ENCODE measurements at regions of chr12 and their contacts with region 1.

Region 1: GRCh38 chr12:74415633-74416032 is 122.0 kb upstream of the ATXN7L3B start:
- DNase-seq: peak; percentile 19
- H3K4me3 ChIP-seq: no peak overlapping the region
- H3K27ac ChIP-seq: no peak overlapping the region
- H3K4me1 ChIP-seq: no peaks in the 10 kb centered on the region
- H3K27me3 ChIP-seq: no peaks in the 10 kb centered on the region
- CTCF ChIP-seq: peak in 1 of 2 donors; percentile 29
- POLR2A ChIP-seq: no peak

Region 2: GRCh38 chr12:73421832-73422231 is 993.8 kb before region 1 on chr12:
- CTCF ChIA-PET with region 1: no interaction called
- POLR2A ChIA-PET with region 1: no interaction called
- dilution Hi-C with region 1: no loop called
- intact Hi-C with region 1: no loop called
- DNase-seq: no peak
- H3K4me3 ChIP-seq: no peak overlapping the region
- H3K27ac ChIP-seq: no peak overlapping the region
- H3K4me1 ChIP-seq: no peaks in the 10 kb centered on the region
- H3K27me3 ChIP-seq: no peaks in the 10 kb centered on the region
- CTCF ChIP-seq: no peak
- POLR2A ChIP-seq: no peak

Region 3: GRCh38 chr12:74021937-74022336 is 393.7 kb before region 1 on chr12:
- CTCF ChIA-PET with region 1: interaction called, 15 read pairs
- POLR2A ChIA-PET with region 1: no interaction called
- dilution Hi-C with region 1: no loop called
- intact Hi-C with region 1: loop called (anchors 2 kb)
- DNase-seq: peak; percentile 33
- H3K4me3 ChIP-seq: no peak overlapping the region
- H3K27ac ChIP-seq: no peak overlapping the region
- H3K4me1 ChIP-seq: no peaks in the 10 kb centered on the region
- H3K27me3 ChIP-seq: no peaks in the 10 kb centered on the region
- CTCF ChIP-seq: peak; percentile 42 to 57
- POLR2A ChIP-seq: no peak

Region 4: DNA sequence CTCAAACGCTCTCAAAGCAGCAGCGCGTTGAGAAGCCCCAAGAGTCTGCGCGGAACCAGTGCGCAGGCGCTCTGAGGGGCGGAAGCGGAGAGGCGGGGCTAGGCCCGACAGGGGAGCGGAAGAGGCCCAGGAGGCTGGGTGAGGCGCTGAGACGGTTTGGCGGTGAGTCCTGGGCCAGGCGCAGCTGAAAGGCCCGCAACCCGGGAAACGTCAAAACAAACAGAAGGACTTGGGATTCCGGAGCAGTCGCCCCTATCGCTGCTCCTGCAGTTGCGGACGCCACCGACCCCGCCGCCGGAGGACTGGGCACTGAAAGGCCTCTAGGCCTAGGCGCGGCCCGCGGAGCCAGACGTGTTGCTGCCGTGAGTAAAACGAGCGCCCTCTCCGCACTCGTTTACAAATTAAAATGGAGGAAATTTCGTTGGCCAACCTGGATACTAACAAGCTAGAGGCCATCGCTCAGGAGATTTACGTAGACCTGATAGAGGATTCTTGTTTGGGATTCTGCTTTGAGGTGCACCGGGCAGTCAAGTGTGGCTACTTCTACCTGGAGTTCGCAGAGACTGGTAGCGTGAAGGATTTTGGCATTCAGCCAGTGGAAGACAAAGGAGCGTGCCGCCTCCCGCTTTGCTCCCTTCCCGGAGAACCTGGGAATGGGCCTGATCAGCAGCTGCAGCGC is 122.2 kb after region 1 on chr12 and contains the start of gene ATXN7L3B:
- CTCF ChIA-PET with region 1: no interaction called
- POLR2A ChIA-PET with region 1: no interaction called
- dilution Hi-C with region 1: no loop called
- intact Hi-C with region 1: loop called (anchors 5 kb)
- DNase-seq: peak; percentile 96
- H3K4me3 ChIP-seq: peak within 1 kb of the TSS; percentile 63 to 96 (median 74)
- H3K27ac ChIP-seq: peak within 1 kb of the TSS; percentile 97
- H3K4me1 ChIP-seq: peaks cover 21% of the 10 kb centered on the region
- H3K27me3 ChIP-seq: peaks cover 0 to 1% of the 10 kb centered on the region in 2 experiments
- CTCF ChIP-seq: no peak
- POLR2A ChIP-seq: peak; percentile 61
- total RNA-seq, gene ATXN7L3B: 25.0 and 25.9 TPM in 2 replicates

Region 5: DNA sequence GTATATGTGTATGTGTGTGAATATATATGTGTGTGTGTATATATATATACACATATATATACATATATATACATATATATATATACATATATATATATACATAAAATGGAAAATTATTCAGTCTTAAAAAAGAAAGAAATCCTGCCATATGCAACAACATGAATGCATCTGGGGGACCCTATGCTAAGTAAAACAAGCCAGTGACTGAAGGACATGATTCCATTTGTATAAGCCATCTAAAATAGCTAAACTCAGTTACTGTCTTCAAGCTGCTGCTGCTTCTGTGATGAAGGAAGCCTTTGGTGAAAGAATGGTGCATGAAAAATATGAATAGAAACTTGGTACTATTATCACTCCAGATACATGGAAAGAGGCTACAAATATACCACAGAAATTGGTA is 240.6 kb after region 1 on chr12:
- CTCF ChIA-PET with region 1: no interaction called
- POLR2A ChIA-PET with region 1: no interaction called
- dilution Hi-C with region 1: no loop called
- intact Hi-C with region 1: no loop called
- DNase-seq: no peak
- H3K4me3 ChIP-seq: no peak overlapping the region
- H3K27ac ChIP-seq: no peak overlapping the region
- H3K4me1 ChIP-seq: no peaks in the 10 kb centered on the region
- H3K27me3 ChIP-seq: no peaks in the 10 kb centered on the region
- CTCF ChIP-seq: no peak
- POLR2A ChIP-seq: no peak